Caco-2 (cell line): ENCODE measurements at regions of chr19 and their contacts with region 1.

Region 1: DNA sequence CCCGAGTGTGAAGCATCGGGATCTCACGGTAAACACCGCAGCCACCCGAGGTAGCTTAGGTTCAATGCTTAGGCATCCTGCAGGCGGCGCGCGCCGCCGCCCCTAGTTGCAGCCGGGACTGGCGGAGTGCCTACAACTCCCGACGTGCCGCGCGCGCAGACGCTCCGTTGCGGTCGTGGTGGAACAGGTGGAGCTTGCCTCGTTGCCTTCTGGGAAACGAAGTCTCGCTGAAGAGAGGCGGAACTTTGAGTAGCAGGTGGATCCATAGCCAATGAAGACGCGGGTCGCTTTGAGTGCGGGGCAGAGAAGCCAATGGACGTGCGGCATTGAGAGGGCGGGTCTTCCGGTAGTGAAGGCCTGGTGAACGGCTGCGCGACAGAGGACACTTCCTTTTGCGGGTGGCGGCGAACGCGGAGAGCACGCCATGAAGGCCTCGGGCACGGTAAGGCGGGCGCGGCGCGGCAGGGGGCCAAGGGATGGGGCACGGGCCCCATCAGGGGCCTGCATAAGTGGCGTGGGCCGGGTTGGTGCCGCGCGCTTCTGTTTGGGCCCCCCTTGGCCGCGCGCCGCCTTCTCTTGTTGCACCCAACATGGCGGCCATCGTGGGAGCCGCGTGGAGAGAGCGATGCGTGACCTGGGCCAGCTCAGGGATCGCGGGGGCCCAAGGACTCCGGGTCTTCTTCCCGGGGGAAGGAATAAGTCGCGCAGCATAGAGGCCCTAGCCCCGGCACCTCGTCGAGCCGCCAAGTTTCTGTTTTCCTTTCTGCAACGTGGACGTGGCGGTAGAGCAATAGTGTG is at the start of gene RPL18A:
- DNase-seq: peak; percentile 97 to 99
- H3K4me3 ChIP-seq: peak within 1 kb of the TSS; percentile 84
- H3K4me3 Mint-ChIP-seq: peak within 1 kb of the TSS; percentile 90
- H3K27ac Mint-ChIP-seq: peak within 1 kb of the TSS; percentile 98
- H3K4me1 ChIP-seq: peaks cover 9% of the 10 kb centered on the region
- H3K4me1 Mint-ChIP-seq: no peaks in the 10 kb centered on the region
- H3K27me3 ChIP-seq: no peaks in the 10 kb centered on the region
- H3K27me3 Mint-ChIP-seq: peaks cover 2% of the 10 kb centered on the region
- CTCF ChIP-seq: peak; percentile 60 to 89
- total RNA-seq, gene RPL18A: 1,599 and 1,686 TPM in 2 replicates

Region 2: DNA sequence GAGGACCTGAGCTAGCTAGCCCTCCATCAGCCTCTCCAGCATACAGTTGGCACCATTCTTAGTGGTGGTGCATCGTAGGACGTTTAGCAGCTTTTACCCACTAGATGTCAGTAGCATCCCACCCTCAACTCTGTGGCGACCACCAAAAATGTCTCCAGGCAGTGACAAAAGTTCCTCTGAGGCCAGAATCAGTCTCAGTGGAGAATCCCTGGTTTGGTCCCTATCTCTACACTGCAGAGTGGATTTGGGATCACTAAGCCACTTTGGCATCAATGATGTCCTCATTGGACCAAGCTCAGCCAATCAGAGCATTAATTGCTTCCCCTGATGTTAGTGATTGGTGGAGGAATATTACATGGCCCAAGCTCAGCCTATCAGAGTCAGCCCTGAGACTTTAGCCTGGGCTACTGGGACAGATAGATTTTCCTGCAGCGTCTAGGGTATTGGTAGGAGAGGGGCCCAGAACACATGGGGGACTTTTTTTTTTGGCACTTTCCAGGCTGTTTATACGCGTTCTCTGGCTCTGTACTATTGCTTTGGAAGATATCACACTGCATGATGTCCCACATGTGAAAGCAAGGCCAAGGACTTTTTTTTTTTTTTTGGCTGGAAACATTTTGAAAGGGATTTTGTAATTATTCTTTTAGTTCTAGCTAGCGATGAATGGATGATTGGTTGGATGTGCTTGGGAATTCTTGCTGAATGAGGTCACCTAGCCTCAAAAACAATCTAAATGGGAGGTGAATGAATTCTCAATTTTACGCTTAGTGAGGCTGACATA is 418.3 kb before region 1 on chr19:
- CTCF ChIA-PET with region 1: no interaction called
- POLR2A ChIA-PET with region 1: no interaction called
- intact Hi-C with region 1: loop called (anchors 5 kb)
- DNase-seq: peak in 1 of 2 experiments; percentile 45
- H3K4me3 ChIP-seq: no peak overlapping the region
- H3K4me3 Mint-ChIP-seq: no peak overlapping the region
- H3K27ac Mint-ChIP-seq: no peak overlapping the region
- H3K4me1 ChIP-seq: no peaks in the 10 kb centered on the region
- H3K4me1 Mint-ChIP-seq: no peaks in the 10 kb centered on the region
- H3K27me3 ChIP-seq: no peaks in the 10 kb centered on the region
- H3K27me3 Mint-ChIP-seq: no peaks in the 10 kb centered on the region
- CTCF ChIP-seq: peak; percentile 44 to 49

Region 3: DNA sequence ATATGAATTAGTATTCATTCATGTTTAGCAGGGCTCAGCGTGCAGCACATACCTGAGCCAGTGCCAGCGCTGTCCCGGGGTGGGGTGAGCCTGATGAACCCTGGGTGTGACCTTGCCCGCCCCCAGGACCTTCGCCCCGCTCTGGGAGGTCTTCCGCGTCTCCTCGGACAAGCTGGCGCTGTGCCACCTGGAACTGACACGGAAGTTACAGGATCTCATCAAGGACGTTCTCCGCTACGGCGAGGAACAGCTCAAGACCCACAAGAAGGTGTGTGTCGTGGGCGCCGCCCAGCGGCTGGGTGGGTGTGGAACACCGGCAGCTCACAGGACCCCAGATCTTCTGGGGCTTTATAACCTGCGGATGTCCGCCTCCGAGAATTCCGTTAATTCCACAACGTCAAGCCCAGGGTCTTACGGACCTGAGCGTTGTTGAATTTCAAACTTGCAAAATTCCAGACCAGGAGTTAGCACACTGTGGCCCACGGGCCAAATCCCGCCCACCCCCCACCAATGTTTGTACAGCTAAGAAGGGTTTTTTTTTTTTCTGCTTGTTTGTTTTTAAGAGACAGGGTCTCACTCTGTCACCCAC is 93.1 kb before region 1 on chr19:
- CTCF ChIA-PET with region 1: interaction called, 3 read pairs
- POLR2A ChIA-PET with region 1: interaction called, 6 read pairs
- intact Hi-C with region 1: loop called (anchors 1 kb)
- DNase-seq: peak; percentile 86 to 88
- H3K4me3 ChIP-seq: peak overlapping the region; percentile 28
- H3K4me3 Mint-ChIP-seq: peak overlapping the region; percentile 73
- H3K27ac Mint-ChIP-seq: no peak overlapping the region
- H3K4me1 ChIP-seq: no peaks in the 10 kb centered on the region
- H3K4me1 Mint-ChIP-seq: no peaks in the 10 kb centered on the region
- H3K27me3 ChIP-seq: no peaks in the 10 kb centered on the region
- H3K27me3 Mint-ChIP-seq: no peaks in the 10 kb centered on the region
- CTCF ChIP-seq: peak; percentile 69 to 90

Region 4: GRCh38 chr19:17947815-17948513 is 88.2 kb after region 1 on chr19:
- CTCF ChIA-PET with region 1: interaction called, 11 read pairs
- POLR2A ChIA-PET with region 1: interaction called, 6 read pairs
- intact Hi-C with region 1: no loop called
- DNase-seq: peak; percentile 92 to 96
- H3K4me3 ChIP-seq: peak overlapping the region; percentile 52
- H3K4me3 Mint-ChIP-seq: peak overlapping the region; percentile 87
- H3K27ac Mint-ChIP-seq: peak overlapping the region; percentile 87
- H3K4me1 ChIP-seq: peaks cover 17% of the 10 kb centered on the region
- H3K4me1 Mint-ChIP-seq: peaks cover 12% of the 10 kb centered on the region
- H3K27me3 ChIP-seq: peaks cover 3% of the 10 kb centered on the region
- H3K27me3 Mint-ChIP-seq: peaks cover 2% of the 10 kb centered on the region
- CTCF ChIP-seq: no peak